AG04450 (cell line): ENCODE measurements at regions of chr18 and their contacts with region 1.

Region 1: GRCh38 chr18:47748847-47749599 is 181.4 kb downstream of the SMAD2 start:
- DNase-seq: no peak
- H3K4me3 ChIP-seq: peak overlapping the region; percentile 45; the same call in 1 of the 2 replicates
- H3K27ac ChIP-seq: no peak overlapping the region
- H3K27me3 ChIP-seq: peaks cover 4% of the 10 kb centered on the region
- CTCF ChIP-seq: peak; percentile 82

Region 2: GRCh38 chr18:47050468-47050867 is 698.6 kb before region 1 on chr18:
- CTCF ChIA-PET with region 1: interaction called, 14 read pairs
- POLR2A ChIA-PET with region 1: no interaction called
- DNase-seq: peak; percentile 8
- H3K4me3 ChIP-seq: no peak overlapping the region
- H3K27ac ChIP-seq: no peak overlapping the region
- H3K27me3 ChIP-seq: peaks cover 2% of the 10 kb centered on the region
- CTCF ChIP-seq: peak; percentile 78

Region 3: GRCh38 chr18:47100214-47100831 is 648.7 kb before region 1 on chr18:
- CTCF ChIA-PET with region 1: interaction called, 13 read pairs
- POLR2A ChIA-PET with region 1: no interaction called
- DNase-seq: peak; percentile 32
- H3K4me3 ChIP-seq: no peak overlapping the region
- H3K27ac ChIP-seq: no peak overlapping the region
- H3K27me3 ChIP-seq: no peaks in the 10 kb centered on the region
- CTCF ChIP-seq: peak; percentile 92

Region 4: GRCh38 chr18:47215554-47216138 is 533.4 kb before region 1 on chr18:
- CTCF ChIA-PET with region 1: interaction called, 37 read pairs
- POLR2A ChIA-PET with region 1: no interaction called
- DNase-seq: peak; percentile 2
- H3K4me3 ChIP-seq: no peak overlapping the region
- H3K27ac ChIP-seq: no peak overlapping the region
- H3K27me3 ChIP-seq: no peaks in the 10 kb centered on the region
- CTCF ChIP-seq: peak; percentile 48

Region 5: GRCh38 chr18:47448956-47449355 is 300.1 kb before region 1 on chr18:
- CTCF ChIA-PET with region 1: no interaction called
- POLR2A ChIA-PET with region 1: no interaction called
- DNase-seq: no peak
- H3K4me3 ChIP-seq: no peak overlapping the region
- H3K27ac ChIP-seq: no peak overlapping the region
- H3K27me3 ChIP-seq: no peaks in the 10 kb centered on the region
- CTCF ChIP-seq: no peak

Region 6: DNA sequence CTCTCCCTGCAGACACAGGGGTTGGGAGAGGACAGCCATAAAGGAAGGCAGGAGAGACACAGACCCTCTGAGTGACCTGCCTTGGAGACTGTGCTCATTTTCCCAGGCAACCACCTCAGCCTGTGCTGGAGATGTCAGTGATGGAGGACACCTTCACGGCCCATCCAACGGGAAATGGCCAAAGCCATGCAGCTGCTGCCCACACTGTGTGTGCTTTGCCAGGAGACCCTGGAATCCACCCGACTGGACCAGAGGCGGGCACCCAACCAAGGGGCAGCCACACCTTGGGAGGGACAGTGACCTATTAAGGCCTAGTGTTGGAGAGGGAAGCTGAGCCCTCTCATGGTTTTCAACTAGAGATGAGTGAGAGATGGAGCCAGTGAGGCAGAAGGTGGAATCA is 11.1 kb before region 1 on chr18:
- CTCF ChIA-PET with region 1: interaction called, 20 read pairs
- POLR2A ChIA-PET with region 1: no interaction called
- DNase-seq: no peak
- H3K4me3 ChIP-seq: no peak overlapping the region
- H3K27ac ChIP-seq: no peak overlapping the region
- H3K27me3 ChIP-seq: no peaks in the 10 kb centered on the region
- CTCF ChIP-seq: no peak

Region 7: GRCh38 chr18:47772374-47773248 is 23.6 kb after region 1 on chr18:
- CTCF ChIA-PET with region 1: interaction called, 12 read pairs
- POLR2A ChIA-PET with region 1: no interaction called
- DNase-seq: no peak
- H3K4me3 ChIP-seq: no peak overlapping the region
- H3K27ac ChIP-seq: no peak overlapping the region
- H3K27me3 ChIP-seq: no peaks in the 10 kb centered on the region
- CTCF ChIP-seq: peak; percentile 69